ENCODE measurements at regions of chr19 and their contacts with region 1.

Region 1: GRCh38 chr19:13195678-13196077 is 45.5 kb downstream of the IER2 start:
- H3K4me3 ChIP-seq: no peak overlapping the region
- H3K27ac ChIP-seq: no peak overlapping the region
- H3K4me1 ChIP-seq: no peaks in the 10 kb centered on the region
- CTCF ChIP-seq: no peak

Region 2: GRCh38 chr19:13172068-13172896 is 23.4 kb before region 1 on chr19:
- CTCF ChIA-PET with region 1: interaction called, 12 read pairs
- POLR2A ChIA-PET with region 1: no interaction called
- H3K4me3 ChIP-seq: no peak overlapping the region
- H3K27ac ChIP-seq: no peak overlapping the region; the same call in 1 of the 2 replicates
- H3K4me1 ChIP-seq: peaks cover 9% of the 10 kb centered on the region
- CTCF ChIP-seq: no peak

Region 3: GRCh38 chr19:13181747-13182388 is 13.8 kb before region 1 on chr19:
- CTCF ChIA-PET with region 1: interaction called, 13 read pairs
- POLR2A ChIA-PET with region 1: interaction called, 3 read pairs
- H3K4me3 ChIP-seq: no peak overlapping the region
- H3K27ac ChIP-seq: peak overlapping the region; percentile 17
- H3K4me1 ChIP-seq: no peaks in the 10 kb centered on the region; the same call in 1 of the 2 replicates
- CTCF ChIP-seq: no peak

Region 4: GRCh38 chr19:13206587-13206986 is 10.9 kb after region 1 on chr19:
- CTCF ChIA-PET with region 1: interaction called, 10 read pairs
- POLR2A ChIA-PET with region 1: interaction called, 6 read pairs
- H3K4me3 ChIP-seq: no peak overlapping the region
- H3K27ac ChIP-seq: no peak overlapping the region
- H3K4me1 ChIP-seq: no peaks in the 10 kb centered on the region
- CTCF ChIP-seq: no peak

Region 5: GRCh38 chr19:13212759-13213330 is 17.2 kb after region 1 on chr19:
- CTCF ChIA-PET with region 1: interaction called, 13 read pairs
- POLR2A ChIA-PET with region 1: interaction called, 6 read pairs
- H3K4me3 ChIP-seq: no peak overlapping the region
- H3K27ac ChIP-seq: no peak overlapping the region
- H3K4me1 ChIP-seq: no peaks in the 10 kb centered on the region
- CTCF ChIP-seq: no peak; the same call in none of the 2 replicates

Region 6: GRCh38 chr19:13262450-13262849 is 66.8 kb after region 1 on chr19:
- CTCF ChIA-PET with region 1: interaction called, 35 read pairs
- POLR2A ChIA-PET with region 1: no interaction called
- H3K4me3 ChIP-seq: no peak overlapping the region
- H3K27ac ChIP-seq: no peak overlapping the region
- H3K4me1 ChIP-seq: no peaks in the 10 kb centered on the region
- CTCF ChIP-seq: peak; percentile 23; the same call in 1 of the 2 replicates

Measured in HEK293 (cell line).